Natural killer cell (primary cell): ENCODE measurements at regions of chr3 and their contacts with region 1.

Region 1: DNA sequence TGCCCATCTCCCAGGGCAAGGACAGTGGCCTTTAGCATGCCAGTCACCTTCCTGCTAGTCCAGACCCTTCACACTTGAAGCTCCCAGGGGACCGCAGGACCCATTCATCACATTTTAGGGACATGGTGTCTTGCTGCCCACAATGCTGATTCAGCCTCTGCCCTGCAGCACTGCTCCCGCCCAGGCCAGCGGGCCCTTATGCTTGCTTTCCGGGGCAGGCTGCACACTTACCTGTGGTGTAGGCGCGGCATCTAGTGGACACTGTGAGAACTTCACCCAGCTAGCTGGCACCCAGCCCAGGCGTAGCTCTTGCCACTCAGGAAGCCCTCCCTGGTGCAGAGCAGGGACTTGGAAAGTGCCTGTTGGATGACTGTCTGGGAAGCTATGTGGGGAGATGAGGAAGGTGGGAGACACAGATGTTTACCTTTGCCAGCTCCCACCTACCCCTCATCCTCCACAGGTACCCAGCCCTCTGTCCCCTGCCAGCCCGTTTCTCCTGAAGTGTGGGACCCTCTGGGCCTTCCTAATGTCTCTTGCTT is 26.2 kb upstream of the NR2C2 start:
- DNase-seq: peak; percentile 73 to 90
- ATAC-seq: peak; percentile 92 to 99 (median 99)
- H3K4me3 ChIP-seq: no peak overlapping the region
- H3K4me3 Mint-ChIP-seq: no peak overlapping the region
- H3K27ac ChIP-seq: no peak overlapping the region
- H3K27ac Mint-ChIP-seq: no peak overlapping the region
- H3K4me1 ChIP-seq: no peaks in the 10 kb centered on the region
- H3K4me1 Mint-ChIP-seq: peaks cover 0 to 8% of the 10 kb centered on the region in 2 donors
- H3K27me3 ChIP-seq: no peaks in the 10 kb centered on the region
- H3K27me3 Mint-ChIP-seq: no peaks in the 10 kb centered on the region
- CTCF ChIP-seq: peak; percentile 96

Region 2: GRCh38 chr3:14508961-14509795 is 412.0 kb before region 1 on chr3:
- intact Hi-C with region 1: loop called (anchors 1 kb)
- DNase-seq: peak; percentile 63 to 73
- ATAC-seq: peak; percentile 40 to 81 (median 66)
- H3K4me3 ChIP-seq: no peak overlapping the region
- H3K4me3 Mint-ChIP-seq: no peak overlapping the region
- H3K27ac ChIP-seq: no peak overlapping the region
- H3K27ac Mint-ChIP-seq: no peak overlapping the region
- H3K4me1 ChIP-seq: peaks cover 3% of the 10 kb centered on the region
- H3K4me1 Mint-ChIP-seq: peaks cover 0 to 13% of the 10 kb centered on the region in 2 donors
- H3K27me3 ChIP-seq: no peaks in the 10 kb centered on the region
- H3K27me3 Mint-ChIP-seq: peaks cover 5 to 8% of the 10 kb centered on the region in 2 donors
- CTCF ChIP-seq: peak; percentile 91

Region 3: DNA sequence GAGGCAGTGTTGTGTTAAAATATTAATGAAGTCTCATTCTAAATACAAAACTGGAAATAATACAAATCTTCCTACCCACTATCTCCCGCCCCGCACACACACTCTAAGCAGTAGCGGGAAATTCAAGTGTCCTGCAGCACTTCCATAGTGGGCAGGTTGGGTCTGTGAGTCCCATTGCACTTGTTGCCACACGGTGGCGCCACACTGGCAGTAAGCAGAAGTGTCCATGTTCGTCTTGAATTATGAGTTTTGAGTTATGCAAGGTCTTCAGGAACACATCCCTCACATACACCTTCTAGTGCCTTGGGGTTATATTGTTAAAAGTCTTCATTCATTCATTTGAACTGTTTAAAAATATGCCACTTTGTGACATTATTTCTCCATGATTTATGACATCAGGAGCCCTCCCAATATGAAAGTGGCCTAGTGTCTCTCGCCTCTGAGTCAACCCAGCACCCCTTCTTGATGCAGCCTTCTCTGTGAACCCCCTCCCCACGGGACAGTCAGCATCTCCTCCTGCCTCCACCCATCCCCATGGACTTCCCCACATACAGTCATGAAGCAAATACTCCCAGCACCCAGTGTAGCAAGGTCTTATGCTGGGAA is 287.2 kb before region 1 on chr3:
- intact Hi-C with region 1: loop called (anchors 1 kb)
- DNase-seq: peak; percentile 45 to 82
- ATAC-seq: peak; percentile 71 to 87 (median 76)
- H3K4me3 ChIP-seq: no peak overlapping the region
- H3K4me3 Mint-ChIP-seq: no peak overlapping the region
- H3K27ac ChIP-seq: no peak overlapping the region
- H3K27ac Mint-ChIP-seq: no peak overlapping the region
- H3K4me1 ChIP-seq: no peaks in the 10 kb centered on the region
- H3K4me1 Mint-ChIP-seq: no peaks in the 10 kb centered on the region
- H3K27me3 ChIP-seq: no peaks in the 10 kb centered on the region
- H3K27me3 Mint-ChIP-seq: peaks cover 16 to 52% of the 10 kb centered on the region in 2 donors
- CTCF ChIP-seq: peak; percentile 73